ENCODE measurements at regions of chr9 and their contacts with region 1.

Region 1: DNA sequence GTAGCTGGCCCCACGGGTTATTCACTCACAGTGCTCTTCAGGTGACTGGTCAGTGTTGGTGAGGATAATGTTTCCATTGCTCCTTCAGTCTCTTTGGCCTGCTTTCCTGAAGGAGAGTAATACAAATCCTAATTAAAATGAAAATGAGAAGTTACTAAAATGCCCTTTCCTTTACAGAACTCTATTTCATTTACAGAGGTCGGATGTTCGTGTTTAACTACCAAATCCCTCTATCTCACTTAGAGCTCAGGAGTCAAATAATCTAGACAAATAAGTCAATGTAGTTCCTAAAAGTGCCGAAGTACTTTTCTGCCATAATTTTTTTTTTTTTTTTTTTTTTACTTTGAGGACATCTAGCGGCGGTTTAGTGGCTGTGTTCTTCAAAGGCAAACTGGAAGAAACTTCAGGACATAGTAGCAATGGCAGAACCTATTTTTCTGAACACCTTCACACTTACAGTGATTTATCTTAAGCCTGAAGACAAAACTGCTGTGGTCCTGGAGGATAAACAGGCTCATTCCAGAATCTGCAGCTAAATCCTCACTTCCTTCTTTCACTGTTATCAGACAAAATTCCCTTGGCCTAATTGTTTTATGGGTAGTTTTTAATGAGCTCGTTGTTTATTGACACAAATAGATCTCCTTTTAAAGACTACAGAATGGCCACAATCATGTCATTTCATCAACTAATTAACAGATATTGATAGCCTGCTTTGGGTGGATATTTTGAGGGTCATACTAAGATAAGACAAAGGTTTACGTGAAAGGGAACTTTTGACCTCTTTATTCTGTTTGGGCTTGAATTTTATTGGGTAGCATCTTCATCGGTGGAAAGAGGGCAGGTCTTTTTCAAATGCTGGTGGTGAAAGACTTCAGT is 207.6 kb upstream of the DMRTA1 start:
- DNase-seq: no peak
- ATAC-seq: no peak
- H3K4me3 Mint-ChIP-seq: no peak overlapping the region
- H3K27ac Mint-ChIP-seq: peak overlapping the region; percentile 48
- H3K4me1 Mint-ChIP-seq: peaks cover 60% of the 10 kb centered on the region
- H3K27me3 Mint-ChIP-seq: peaks cover 1% of the 10 kb centered on the region
- CTCF ChIP-seq: no peak

Region 2: GRCh38 chr9:21381448-21382339 is 857.4 kb before region 1 on chr9:
- CTCF ChIA-PET with region 1: no interaction called
- POLR2A ChIA-PET with region 1: no interaction called
- intact Hi-C with region 1: loop called (anchors 1 kb)
- DNase-seq: peak; percentile 54
- ATAC-seq: peak; percentile 99
- H3K4me3 Mint-ChIP-seq: no peak overlapping the region
- H3K27ac Mint-ChIP-seq: peak overlapping the region; percentile 41
- H3K4me1 Mint-ChIP-seq: peaks cover 25% of the 10 kb centered on the region
- H3K27me3 Mint-ChIP-seq: peaks cover 16% of the 10 kb centered on the region
- CTCF ChIP-seq: no peak

Region 3: DNA sequence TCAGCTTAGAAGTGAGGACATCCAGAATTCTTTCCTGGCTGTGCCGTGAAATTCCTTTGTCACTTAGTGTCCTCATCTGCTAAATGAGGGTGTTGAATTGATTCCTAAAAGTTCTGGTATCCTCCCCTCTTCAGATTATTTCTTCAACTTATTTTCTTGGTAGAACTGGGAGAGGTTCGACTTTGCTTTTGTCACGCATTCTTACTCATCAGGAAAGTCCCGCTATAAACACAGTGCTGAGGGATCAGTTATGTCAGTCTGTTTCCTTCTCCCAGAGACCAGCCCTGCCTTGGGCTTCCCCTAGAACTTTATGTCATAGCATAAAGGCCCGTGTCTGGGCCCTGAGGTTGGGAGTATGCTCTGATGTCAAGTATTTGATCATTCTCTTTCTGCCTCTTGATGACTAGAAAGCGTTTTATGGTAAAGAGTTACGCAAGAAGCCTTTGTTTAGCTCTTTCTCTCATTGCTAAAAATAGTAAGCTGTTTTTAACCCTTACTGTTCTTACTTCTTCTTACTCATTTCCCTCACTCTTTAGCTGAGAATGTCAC is 407.0 kb before region 1 on chr9:
- CTCF ChIA-PET with region 1: interaction called, 9 read pairs
- POLR2A ChIA-PET with region 1: no interaction called
- intact Hi-C with region 1: loop called (anchors 1 kb)
- DNase-seq: no peak
- ATAC-seq: peak; percentile 54
- H3K4me3 Mint-ChIP-seq: peak overlapping the region; percentile 40
- H3K27ac Mint-ChIP-seq: peak overlapping the region; percentile 86
- H3K4me1 Mint-ChIP-seq: peaks cover 59% of the 10 kb centered on the region
- H3K27me3 Mint-ChIP-seq: no peaks in the 10 kb centered on the region
- CTCF ChIP-seq: no peak

Region 4: GRCh38 chr9:22008736-22009562 is 230.1 kb before region 1 on chr9 and contains the start of gene CDKN2B:
- CTCF ChIA-PET with region 1: interaction called, 45 read pairs
- POLR2A ChIA-PET with region 1: interaction called, 12 read pairs
- intact Hi-C with region 1: loop called (anchors 1 kb)
- DNase-seq: peak; percentile 78
- ATAC-seq: peak; percentile 94
- H3K4me3 Mint-ChIP-seq: peak within 1 kb of the TSS; percentile 87
- H3K27ac Mint-ChIP-seq: peak within 1 kb of the TSS; percentile 24
- H3K4me1 Mint-ChIP-seq: peaks cover 34% of the 10 kb centered on the region
- H3K27me3 Mint-ChIP-seq: peaks cover 29% of the 10 kb centered on the region
- CTCF ChIP-seq: peak; percentile 79
- total RNA-seq, gene CDKN2B: 0.32 and 0.38 TPM in 2 replicates

Region 5: GRCh38 chr9:22169727-22170503 is 69.1 kb before region 1 on chr9:
- CTCF ChIA-PET with region 1: interaction called, 4 read pairs
- POLR2A ChIA-PET with region 1: no interaction called
- intact Hi-C with region 1: loop called (anchors 2 kb)
- DNase-seq: no peak
- ATAC-seq: peak; percentile 47
- H3K4me3 Mint-ChIP-seq: peak overlapping the region; percentile 0
- H3K27ac Mint-ChIP-seq: peak overlapping the region; percentile 81
- H3K4me1 Mint-ChIP-seq: peaks cover 58% of the 10 kb centered on the region
- H3K27me3 Mint-ChIP-seq: no peaks in the 10 kb centered on the region
- CTCF ChIP-seq: no peak